Activated T-helper 2 cell treated with anti-CD3 and anti-CD28 coated beads, Interferon-gamma antibody, Interleukin-2, Interleukin-4, amounts not matched to agents 10 μg/mL and 5 μg/mL and 100 μg/mL, durations not matched to agents 14 hours and 24 hours and 36 hours (primary cell): ENCODE measurements at regions of chr7 and their contacts with region 1.

Region 1: GRCh38 chr7:44858161-44858560 is 10.3 kb upstream of the H2AZ2 start:
- DNase-seq: no peak
- H3K4me3 Mint-ChIP-seq: no peak overlapping the region
- H3K27ac Mint-ChIP-seq: no peak overlapping the region
- H3K4me1 Mint-ChIP-seq: peaks cover 13% of the 10 kb centered on the region
- H3K27me3 Mint-ChIP-seq: peaks cover 10% of the 10 kb centered on the region

Region 2: DNA sequence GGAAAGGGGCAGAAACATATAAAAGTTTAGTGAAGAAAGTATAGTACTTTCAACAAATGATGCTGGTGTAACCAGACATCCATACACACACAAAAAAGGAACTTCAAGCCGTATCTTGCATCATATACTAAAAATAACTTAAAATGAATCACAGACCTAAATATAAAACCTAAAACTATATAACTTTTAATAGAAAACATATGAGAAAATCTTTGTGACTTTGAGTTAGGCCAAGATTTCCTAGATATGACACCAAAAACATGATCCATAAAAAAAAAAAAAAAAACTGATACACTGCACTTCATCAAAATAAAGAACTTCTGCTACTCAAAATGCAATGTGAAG is 408.6 kb before region 1 on chr7:
- intact Hi-C with region 1: no loop called
- DNase-seq: no peak
- H3K4me3 Mint-ChIP-seq: no peak overlapping the region
- H3K27ac Mint-ChIP-seq: peak overlapping the region; percentile 46
- H3K4me1 Mint-ChIP-seq: peaks cover 27% of the 10 kb centered on the region
- H3K27me3 Mint-ChIP-seq: no peaks in the 10 kb centered on the region

Region 3: GRCh38 chr7:44914992-44915607 is 56.9 kb after region 1 on chr7:
- intact Hi-C with region 1: loop called (anchors 2 kb)
- DNase-seq: peak; percentile 78
- H3K4me3 Mint-ChIP-seq: peak overlapping the region; percentile 13
- H3K27ac Mint-ChIP-seq: peak overlapping the region; percentile 92
- H3K4me1 Mint-ChIP-seq: peaks cover 14% of the 10 kb centered on the region
- H3K27me3 Mint-ChIP-seq: no peaks in the 10 kb centered on the region

Region 4: GRCh38 chr7:44921607-44922359 is 63.6 kb after region 1 on chr7:
- intact Hi-C with region 1: loop called (anchors 1 kb)
- DNase-seq: peak; percentile 83
- H3K4me3 Mint-ChIP-seq: no peak overlapping the region
- H3K27ac Mint-ChIP-seq: no peak overlapping the region
- H3K4me1 Mint-ChIP-seq: peaks cover 14% of the 10 kb centered on the region
- H3K27me3 Mint-ChIP-seq: no peaks in the 10 kb centered on the region

Region 5: DNA sequence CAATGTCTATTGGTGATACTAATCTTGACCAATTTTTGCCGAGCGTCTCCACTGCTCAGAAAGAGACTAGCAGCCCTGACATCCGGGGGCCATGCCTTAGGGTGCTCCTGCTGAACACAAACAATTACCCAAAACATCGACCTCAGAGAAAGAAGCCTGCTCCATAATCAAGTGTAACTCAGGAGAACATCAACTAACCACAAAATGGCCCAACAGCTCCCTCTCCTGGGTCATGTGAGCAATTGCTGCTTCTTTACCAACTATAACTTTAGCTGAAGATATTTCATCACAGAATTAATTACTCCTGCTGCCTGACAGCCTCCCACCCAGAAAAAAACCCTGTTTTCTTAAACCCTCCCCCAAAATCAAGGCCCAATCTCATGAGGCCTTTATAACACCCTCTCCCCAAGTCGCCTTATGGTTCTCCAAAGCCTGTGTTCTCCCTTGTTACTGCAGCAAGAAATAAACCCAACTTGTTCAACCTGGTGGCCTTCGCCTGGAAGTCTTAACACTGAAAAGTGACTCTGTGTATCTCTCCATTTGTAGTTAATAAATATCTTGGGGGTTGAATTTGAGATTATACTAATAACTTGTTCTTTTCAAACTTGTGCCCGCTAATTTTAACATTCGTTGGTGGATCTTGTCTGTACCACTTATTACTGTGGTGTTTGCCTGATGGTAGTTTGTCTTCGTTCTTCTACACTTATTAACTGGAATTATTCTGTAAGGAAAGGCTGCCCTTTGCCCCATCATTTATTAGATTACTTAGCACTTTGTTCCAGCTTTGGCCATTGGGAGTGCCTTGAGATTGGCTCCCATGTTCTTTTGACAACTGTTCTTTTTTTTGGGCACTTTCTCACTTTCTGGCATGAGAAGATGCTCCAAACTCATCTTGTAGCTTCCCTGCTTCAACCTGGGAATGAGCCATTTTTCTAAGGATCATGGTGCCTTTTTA is 278.2 kb after region 1 on chr7:
- intact Hi-C with region 1: loop called (anchors 1 kb)
- DNase-seq: peak; percentile 52
- H3K4me3 Mint-ChIP-seq: no peak overlapping the region
- H3K27ac Mint-ChIP-seq: no peak overlapping the region
- H3K4me1 Mint-ChIP-seq: peaks cover 16% of the 10 kb centered on the region
- H3K27me3 Mint-ChIP-seq: peaks cover 15% of the 10 kb centered on the region

Region 6: GRCh38 chr7:45217358-45217757 is 359.2 kb after region 1 on chr7:
- intact Hi-C with region 1: no loop called
- DNase-seq: no peak
- H3K4me3 Mint-ChIP-seq: no peak overlapping the region
- H3K27ac Mint-ChIP-seq: no peak overlapping the region
- H3K4me1 Mint-ChIP-seq: no peaks in the 10 kb centered on the region
- H3K27me3 Mint-ChIP-seq: peaks cover 33% of the 10 kb centered on the region